GM12878 (cell line): ENCODE measurements at regions of chr11 and their contacts with region 1.

Region 1: GRCh38 chr11:100681064-100681502 is 6.0 kb upstream of the ARHGAP42 start:
- DNase-seq: peak; percentile 95
- ATAC-seq: peak; percentile 97
- H3K4me3 ChIP-seq: no peak overlapping the region; the same call in 1 of the 2 replicates
- H3K27ac ChIP-seq: peak overlapping the region; percentile 51
- H3K4me1 ChIP-seq: peaks cover 41% of the 10 kb centered on the region
- H3K27me3 ChIP-seq: no peaks in the 10 kb centered on the region
- CTCF ChIP-seq: no peak
- EP300 ChIP-seq: peak; percentile 95 to 98
- POLR2A ChIP-seq: no peak
- RAD21 ChIP-seq: no peak

Region 2: DNA sequence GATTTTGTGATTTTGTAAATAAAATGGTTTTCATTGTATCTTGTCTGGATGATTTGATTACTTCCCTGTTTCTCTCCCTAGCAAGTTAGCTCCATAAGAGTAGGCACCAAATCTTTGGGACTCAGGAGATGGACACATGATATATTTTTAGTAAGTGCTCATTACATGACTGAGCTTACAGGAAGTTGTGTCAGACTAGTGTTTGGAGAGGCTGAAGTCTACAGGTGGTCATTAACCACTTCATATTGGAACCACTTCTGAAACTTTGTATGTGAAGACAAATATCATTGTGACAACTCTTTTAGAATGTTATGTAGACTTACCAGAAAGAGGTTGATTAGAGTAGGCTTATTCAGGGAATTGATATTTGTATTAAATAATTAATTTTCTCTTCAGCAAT is 25.1 kb after region 1 on chr11:
- CTCF ChIA-PET with region 1: interaction called, 12 read pairs
- POLR2A ChIA-PET with region 1: no interaction called
- RAD21 ChIA-PET with region 1: interaction called, 5 read pairs
- SMC1A ChIA-PET with region 1: interaction called, 3 read pairs
- in situ Hi-C with region 1: no loop called
- intact Hi-C with region 1: no loop called
- DNase-seq: no peak
- ATAC-seq: peak; percentile 81
- H3K4me3 ChIP-seq: no peak overlapping the region
- H3K27ac ChIP-seq: no peak overlapping the region
- H3K4me1 ChIP-seq: peaks cover 25% of the 10 kb centered on the region
- H3K27me3 ChIP-seq: no peaks in the 10 kb centered on the region
- CTCF ChIP-seq: no peak
- EP300 ChIP-seq: no peak
- POLR2A ChIP-seq: no peak
- RAD21 ChIP-seq: no peak

Region 3: DNA sequence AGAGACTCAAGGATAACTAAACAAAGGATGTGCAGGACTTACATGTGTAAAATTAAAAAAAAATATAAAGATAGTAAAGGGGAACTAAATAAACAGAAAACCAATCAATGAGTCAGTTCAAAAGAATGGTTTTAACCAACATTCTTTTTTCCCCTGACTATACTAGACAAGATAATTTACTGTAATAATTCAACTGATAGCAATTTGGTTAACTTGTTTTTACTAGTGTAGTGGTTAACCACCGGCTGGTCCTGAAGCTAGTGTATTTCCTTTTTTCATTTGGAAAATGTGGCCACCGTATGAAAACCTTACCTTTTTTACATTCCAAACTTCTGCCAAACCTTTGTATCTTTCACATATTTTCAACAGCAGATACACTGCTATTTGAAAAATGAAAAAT is 129.1 kb after region 1 on chr11:
- CTCF ChIA-PET with region 1: no interaction called
- POLR2A ChIA-PET with region 1: no interaction called
- RAD21 ChIA-PET with region 1: no interaction called
- SMC1A ChIA-PET with region 1: no interaction called
- in situ Hi-C with region 1: no loop called
- intact Hi-C with region 1: loop called (anchors 5 kb)
- DNase-seq: no peak
- ATAC-seq: peak; percentile 74
- H3K4me3 ChIP-seq: no peak overlapping the region
- H3K27ac ChIP-seq: no peak overlapping the region
- H3K4me1 ChIP-seq: no peaks in the 10 kb centered on the region
- H3K27me3 ChIP-seq: no peaks in the 10 kb centered on the region
- CTCF ChIP-seq: no peak
- EP300 ChIP-seq: no peak
- POLR2A ChIP-seq: no peak
- RAD21 ChIP-seq: no peak

Region 4: DNA sequence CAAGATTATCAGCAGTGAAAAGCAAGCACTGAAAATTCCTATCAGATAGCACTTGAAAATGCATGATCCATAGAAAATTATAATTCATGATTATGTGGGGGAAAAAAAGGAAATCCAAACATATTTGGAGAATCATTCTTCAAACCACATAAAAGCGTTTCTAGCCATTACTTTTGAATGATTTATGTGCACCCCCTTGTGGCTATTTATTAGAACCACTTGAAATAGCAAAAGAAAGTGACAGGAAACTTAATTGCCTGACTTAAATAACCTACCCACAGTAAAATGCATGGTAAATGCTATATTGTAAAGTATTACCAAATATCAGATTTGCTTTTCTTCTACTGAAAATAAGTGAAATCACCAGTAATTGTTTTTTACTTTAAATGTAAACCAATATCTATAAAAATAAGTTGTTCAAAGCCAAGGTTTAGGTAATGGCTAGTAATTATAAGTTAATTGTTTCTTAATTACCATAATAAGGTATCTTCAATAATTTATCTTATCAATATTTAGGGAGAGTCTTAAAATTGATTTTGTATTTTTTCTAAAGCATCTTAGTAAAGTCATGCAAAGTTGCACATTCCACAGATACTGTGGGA is 174.5 kb after region 1 on chr11:
- CTCF ChIA-PET with region 1: interaction called, 21 read pairs
- POLR2A ChIA-PET with region 1: no interaction called
- RAD21 ChIA-PET with region 1: interaction called, 4 read pairs
- SMC1A ChIA-PET with region 1: interaction called, 13 read pairs
- in situ Hi-C with region 1: loop called (anchors 10 kb)
- intact Hi-C with region 1: loop called (anchors 1 kb)
- DNase-seq: no peak
- ATAC-seq: peak; percentile 60
- H3K4me3 ChIP-seq: no peak overlapping the region
- H3K27ac ChIP-seq: no peak overlapping the region
- H3K4me1 ChIP-seq: no peaks in the 10 kb centered on the region
- H3K27me3 ChIP-seq: no peaks in the 10 kb centered on the region
- CTCF ChIP-seq: peak; percentile 35 to 64 (median 37); a peak in 4 of 6 replicates
- EP300 ChIP-seq: no peak
- POLR2A ChIP-seq: no peak
- RAD21 ChIP-seq: peak; percentile 77

Region 5: GRCh38 chr11:101870510-101870909 is 1189.4 kb after region 1 on chr11:
- CTCF ChIA-PET with region 1: no interaction called
- POLR2A ChIA-PET with region 1: no interaction called
- RAD21 ChIA-PET with region 1: no interaction called
- SMC1A ChIA-PET with region 1: no interaction called
- in situ Hi-C with region 1: no loop called
- intact Hi-C with region 1: no loop called
- DNase-seq: no peak
- ATAC-seq: no peak
- H3K4me3 ChIP-seq: no peak overlapping the region
- H3K27ac ChIP-seq: no peak overlapping the region
- H3K4me1 ChIP-seq: no peaks in the 10 kb centered on the region
- H3K27me3 ChIP-seq: no peaks in the 10 kb centered on the region
- CTCF ChIP-seq: no peak
- EP300 ChIP-seq: no peak
- POLR2A ChIP-seq: no peak
- RAD21 ChIP-seq: no peak